ENCODE measurements at regions of chr11 and their contacts with region 1.

Region 1: GRCh38 chr11:65711785-65712632 is at the start of gene KAT5:
- DNase-seq: peak; percentile 95 to 99 (median 98)
- ATAC-seq: peak; percentile 87
- H3K4me3 ChIP-seq: peak within 1 kb of the TSS; percentile 100
- H3K4me3 Mint-ChIP-seq: peak within 1 kb of the TSS; percentile 91 to 99 (median 95)
- H3K27ac ChIP-seq: peak within 1 kb of the TSS; percentile 95
- H3K27ac Mint-ChIP-seq: peak within 1 kb of the TSS; percentile 93 to 100 (median 99)
- H3K4me1 ChIP-seq: peaks cover 5 to 9% of the 10 kb centered on the region in 2 donors
- H3K4me1 Mint-ChIP-seq: peaks cover 12 to 41% (median 25%) of the 10 kb centered on the region in 7 donors
- H3K27me3 ChIP-seq: no peaks in the 10 kb centered on the region
- H3K27me3 Mint-ChIP-seq: peaks cover 0 to 5% (median 0%) of the 10 kb centered on the region in 5 donors
- total RNA-seq, gene KAT5: 68.6 to 133 (median 113) TPM

Region 2: DNA sequence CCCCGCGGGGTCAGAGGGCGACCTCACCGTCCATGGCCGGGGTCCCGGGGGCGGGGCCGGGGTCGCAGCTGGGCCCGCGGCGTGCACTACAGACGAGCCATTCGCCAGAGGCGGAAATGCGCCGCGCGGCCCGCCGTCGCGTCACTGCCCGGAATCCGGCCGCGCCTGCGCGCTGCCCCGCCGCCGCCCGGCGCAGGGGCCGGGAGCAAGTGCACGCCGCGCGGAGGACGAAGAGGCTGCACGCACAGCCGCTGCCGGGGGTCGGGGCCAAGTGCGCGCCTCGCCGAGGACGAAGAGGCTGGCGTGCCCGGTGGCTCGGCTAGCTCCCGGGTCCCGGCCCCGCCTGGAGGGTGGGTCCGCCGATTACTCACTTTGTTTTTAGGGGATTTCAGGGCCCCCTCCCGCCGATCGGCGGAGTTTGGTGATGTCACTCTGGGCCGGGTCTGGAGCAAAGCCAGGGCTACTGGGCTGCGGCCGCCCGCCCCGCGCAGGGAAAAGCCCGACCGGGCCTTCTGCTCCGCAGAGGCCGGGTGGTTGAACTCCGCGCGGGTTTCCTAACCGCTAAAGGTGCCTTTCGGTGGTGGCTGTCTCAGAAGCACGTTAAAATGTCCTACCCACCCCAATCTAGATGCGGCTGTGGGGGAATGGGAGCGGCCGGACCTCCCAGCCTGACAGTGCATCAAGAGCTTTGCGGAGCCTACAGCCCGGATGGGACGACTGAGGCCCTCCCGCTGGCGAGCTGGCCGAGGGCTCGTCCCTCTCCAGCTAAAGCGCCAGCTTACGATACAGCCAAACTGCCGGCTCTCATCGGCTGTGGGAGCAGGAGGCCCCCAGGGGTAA is 49.0 kb before region 1 on chr11 and contains the start of gene RELA:
- CTCF ChIA-PET with region 1: interaction called, 6 read pairs
- POLR2A ChIA-PET with region 1: interaction called, 16 read pairs
- intact Hi-C with region 1: loop called (anchors 2 kb)
- DNase-seq: peak; percentile 84 to 92 (median 89)
- ATAC-seq: peak; percentile 92
- H3K4me3 ChIP-seq: peak within 1 kb of the TSS; percentile 85
- H3K4me3 Mint-ChIP-seq: peak within 1 kb of the TSS; percentile 86 to 93 (median 90)
- H3K27ac ChIP-seq: peak within 1 kb of the TSS; percentile 99
- H3K27ac Mint-ChIP-seq: peak within 1 kb of the TSS; percentile 86 to 95 (median 92)
- H3K4me1 ChIP-seq: peaks cover 20 to 33% of the 10 kb centered on the region in 2 donors
- H3K4me1 Mint-ChIP-seq: peaks cover 10 to 43% (median 31%) of the 10 kb centered on the region in 7 donors
- H3K27me3 ChIP-seq: no peaks in the 10 kb centered on the region
- H3K27me3 Mint-ChIP-seq: no peaks in the 10 kb centered on the region
- total RNA-seq, gene RELA: 106 to 303 (median 165) TPM

Region 3: DNA sequence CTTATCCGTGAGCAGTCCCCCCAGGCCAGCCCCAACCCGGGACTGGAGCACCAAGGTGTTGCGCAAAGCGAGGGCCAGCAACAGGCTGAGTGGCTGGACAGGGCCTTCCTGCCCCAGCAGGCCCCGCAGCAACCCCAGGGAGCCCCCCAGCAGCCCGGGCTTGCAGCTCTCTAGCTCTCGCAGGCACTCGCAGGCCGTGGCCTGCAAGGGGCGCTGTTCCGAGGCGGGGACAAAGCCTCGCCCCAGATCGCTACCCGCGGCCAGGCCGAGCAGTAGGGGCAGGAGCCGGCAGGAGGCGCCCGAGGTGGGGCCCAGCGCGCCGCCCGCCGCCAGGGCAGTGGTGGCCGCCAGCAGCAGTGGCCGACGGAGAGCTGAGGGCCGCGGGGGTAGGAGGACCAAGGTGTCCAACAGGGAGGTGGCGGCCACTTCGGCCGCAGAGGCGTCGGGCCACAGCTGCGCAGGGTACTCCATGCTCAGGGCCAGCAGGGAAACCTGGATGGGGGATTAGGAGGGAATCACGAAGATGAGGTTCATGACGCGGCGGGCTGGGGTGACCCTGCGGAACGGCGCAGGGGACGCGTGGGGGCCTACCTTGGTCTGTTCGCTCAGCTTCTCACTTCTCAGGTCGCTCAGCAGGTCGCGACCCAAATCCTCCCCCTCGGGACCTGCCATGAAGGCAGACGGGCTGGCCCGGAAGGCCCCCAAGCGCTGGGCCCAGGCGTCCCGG is 68.0 kb after region 1 on chr11:
- CTCF ChIA-PET with region 1: interaction called, 8 read pairs
- POLR2A ChIA-PET with region 1: no interaction called
- intact Hi-C with region 1: loop called in 1 of 2 experiments (anchors 1 kb)
- DNase-seq: peak; percentile 55 to 90 (median 72)
- ATAC-seq: peak; percentile 84
- H3K4me3 ChIP-seq: peak overlapping the region; percentile 74
- H3K4me3 Mint-ChIP-seq: peak overlapping the region; percentile 77 to 91 (median 86)
- H3K27ac ChIP-seq: peak overlapping the region; percentile 75
- H3K27ac Mint-ChIP-seq: peak overlapping the region in 7 of 9 donors; percentile 39 to 88 (median 73)
- H3K4me1 ChIP-seq: peaks cover 7 to 10% of the 10 kb centered on the region in 2 donors
- H3K4me1 Mint-ChIP-seq: peaks cover 5 to 20% (median 13%) of the 10 kb centered on the region in 7 donors
- H3K27me3 ChIP-seq: no peaks in the 10 kb centered on the region
- H3K27me3 Mint-ChIP-seq: peaks cover 0 to 15% (median under 1%) of the 10 kb centered on the region in 5 donors

Region 4: DNA sequence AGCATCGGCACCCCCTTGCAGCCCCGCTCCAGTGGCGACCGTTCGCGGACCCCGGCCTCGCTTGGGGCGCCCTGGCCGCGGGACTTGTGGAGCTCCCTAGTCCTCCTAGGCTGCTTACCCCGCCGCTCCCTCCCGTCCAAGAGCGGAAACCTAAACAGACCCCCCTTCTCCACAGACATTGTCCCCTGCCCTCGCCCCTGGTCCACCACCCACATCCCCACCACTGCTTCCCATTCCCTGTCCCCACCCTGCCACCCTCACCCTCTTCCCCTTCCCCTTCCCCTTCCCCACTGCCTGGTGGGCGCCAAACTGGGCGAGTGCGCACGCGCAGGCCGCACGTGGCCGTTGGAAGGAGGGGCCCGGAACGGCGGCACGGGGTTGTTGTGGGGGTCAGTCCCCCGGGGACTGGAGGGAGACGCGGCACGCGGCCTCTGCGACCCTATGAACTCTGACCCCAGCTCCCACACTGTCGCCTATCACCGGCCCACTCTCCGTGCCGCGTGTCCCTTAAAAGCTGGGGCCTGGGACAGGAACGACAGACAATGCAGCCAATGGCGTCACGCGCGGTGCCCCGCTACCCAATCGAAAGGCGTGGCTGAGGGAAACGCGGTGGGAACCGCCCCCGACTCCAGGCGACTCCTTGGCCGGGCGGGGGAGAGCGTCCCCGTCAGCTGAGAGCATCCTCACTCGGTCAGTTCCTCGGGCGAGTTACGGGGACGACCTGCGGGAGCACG is 121.5 kb after region 1 on chr11 and contains the start of gene SNX32:
- CTCF ChIA-PET with region 1: no interaction called
- POLR2A ChIA-PET with region 1: no interaction called
- intact Hi-C with region 1: loop called in 1 of 2 experiments (anchors 1 kb)
- DNase-seq: peak; percentile 88 to 94 (median 93)
- ATAC-seq: peak; percentile 100
- H3K4me3 ChIP-seq: peak within 1 kb of the TSS; percentile 91
- H3K4me3 Mint-ChIP-seq: no peak within 1 kb of the TSS
- H3K27ac ChIP-seq: peak within 1 kb of the TSS; percentile 78
- H3K27ac Mint-ChIP-seq: peak within 1 kb of the TSS in 1 of 9 donors; percentile 91
- H3K4me1 ChIP-seq: peaks cover 10 to 13% of the 10 kb centered on the region in 2 donors
- H3K4me1 Mint-ChIP-seq: peaks cover 7 to 17% (median 7%) of the 10 kb centered on the region in 7 donors
- H3K27me3 ChIP-seq: no peaks in the 10 kb centered on the region
- H3K27me3 Mint-ChIP-seq: peaks cover 0 to 21% (median 0%) of the 10 kb centered on the region in 5 donors
- total RNA-seq, gene SNX32: 0.81 to 2.0 (median 1.1) TPM

Region 5: DNA sequence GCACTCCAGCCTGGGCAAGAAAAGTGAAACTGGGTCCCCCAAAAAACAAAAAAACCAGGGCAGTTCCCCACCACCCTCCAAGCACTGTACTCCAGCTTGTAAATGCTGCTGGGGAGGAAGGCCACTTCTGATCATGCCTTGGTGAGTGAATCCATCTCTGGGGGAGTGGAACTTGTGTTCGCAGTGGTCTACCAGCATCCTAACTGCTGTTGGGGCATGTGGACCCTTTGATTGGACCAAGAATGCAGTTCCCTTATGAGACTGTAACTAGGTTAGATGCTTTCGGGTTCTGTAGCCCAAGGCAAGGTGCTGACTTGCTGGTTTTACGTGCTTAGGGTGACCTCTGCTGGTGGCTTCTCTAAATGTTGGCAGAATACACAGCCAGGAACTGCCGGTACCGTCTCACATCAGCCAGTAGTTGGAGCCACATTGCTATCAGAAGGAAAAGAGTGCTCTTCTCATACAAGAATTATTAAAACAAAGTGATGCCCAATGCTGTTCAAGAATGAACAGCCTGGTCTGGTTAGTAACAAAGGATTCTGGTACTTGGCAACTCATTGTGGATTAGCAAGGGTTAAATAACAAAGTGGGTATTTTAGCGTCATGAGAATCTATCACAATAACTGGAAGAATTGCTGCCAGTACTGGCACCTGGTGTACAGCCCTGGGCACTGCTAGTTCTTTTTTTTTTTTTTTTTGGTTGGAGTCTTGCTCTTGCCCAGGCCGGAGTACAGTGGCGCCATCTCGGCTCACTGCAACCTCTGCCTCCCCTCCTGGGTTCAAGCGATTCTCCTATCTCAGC is 277.0 kb after region 1 on chr11:
- CTCF ChIA-PET with region 1: interaction called, 6 read pairs
- POLR2A ChIA-PET with region 1: interaction called, 4 read pairs
- intact Hi-C with region 1: loop called (anchors 1 kb)
- DNase-seq: peak; percentile 66 to 95 (median 91)
- ATAC-seq: peak; percentile 100
- H3K4me3 ChIP-seq: no peak overlapping the region
- H3K4me3 Mint-ChIP-seq: no peak overlapping the region
- H3K27ac ChIP-seq: no peak overlapping the region
- H3K27ac Mint-ChIP-seq: peak overlapping the region; percentile 0 to 90 (median 74)
- H3K4me1 ChIP-seq: no peaks in the 10 kb centered on the region
- H3K4me1 Mint-ChIP-seq: peaks cover 5 to 7% (median 6%) of the 10 kb centered on the region in 7 donors
- H3K27me3 ChIP-seq: no peaks in the 10 kb centered on the region
- H3K27me3 Mint-ChIP-seq: no peaks in the 10 kb centered on the region

Region 6: DNA sequence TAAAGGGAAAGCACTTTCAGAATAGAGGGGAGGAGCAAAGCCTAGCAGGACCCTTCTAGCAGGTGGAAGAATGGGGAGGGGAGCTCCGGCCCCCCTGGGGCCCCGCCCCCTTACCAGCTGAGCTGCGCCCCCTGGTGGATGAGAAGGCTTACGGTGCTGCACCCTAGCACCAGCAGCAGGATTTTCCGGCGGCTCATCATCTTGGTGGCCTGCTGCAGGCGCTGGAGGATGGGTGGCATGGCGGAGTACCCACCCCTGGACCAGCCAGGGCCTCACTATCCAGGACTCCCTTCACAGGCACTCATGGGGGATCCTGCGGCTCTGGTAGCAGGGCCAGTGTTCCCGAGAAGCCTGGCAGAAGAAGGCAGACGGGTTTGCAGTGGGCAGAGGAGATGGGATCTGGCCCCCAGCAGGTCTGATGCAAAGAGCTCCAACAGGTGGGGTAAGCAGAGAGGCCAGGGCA is 333.2 kb after region 1 on chr11:
- CTCF ChIA-PET with region 1: interaction called, 5 read pairs
- POLR2A ChIA-PET with region 1: interaction called, 3 read pairs
- intact Hi-C with region 1: loop called in 1 of 2 experiments (anchors 1 kb)
- DNase-seq: peak; percentile 70 to 89 (median 81)
- ATAC-seq: peak; percentile 98
- H3K4me3 ChIP-seq: no peak overlapping the region
- H3K4me3 Mint-ChIP-seq: peak overlapping the region in 3 of 10 donors; percentile 12 to 29 (median 17)
- H3K27ac ChIP-seq: no peak overlapping the region
- H3K27ac Mint-ChIP-seq: peak overlapping the region in 2 of 9 donors; percentile 17 to 34
- H3K4me1 ChIP-seq: peaks cover 0 to 9% of the 10 kb centered on the region in 2 donors
- H3K4me1 Mint-ChIP-seq: peaks cover 4 to 23% (median 15%) of the 10 kb centered on the region in 7 donors
- H3K27me3 ChIP-seq: no peaks in the 10 kb centered on the region
- H3K27me3 Mint-ChIP-seq: peaks cover 0 to 19% (median 0%) of the 10 kb centered on the region in 5 donors